Naive thymus-derived CD4-positive, alpha-beta T cell (primary cell): ENCODE measurements at regions of chr16 and their contacts with region 1.

Region 1: GRCh38 chr16:75110637-75111513 is 5.7 kb downstream of the LDHD start:
- DNase-seq: peak; percentile 66 to 83 (median 78)
- ATAC-seq: peak; percentile 91
- H3K4me3 ChIP-seq: peak overlapping the region; percentile 36
- H3K4me3 Mint-ChIP-seq: peak overlapping the region in 9 of 10 donors; percentile 34 to 78 (median 59)
- H3K27ac ChIP-seq: no peak overlapping the region
- H3K27ac Mint-ChIP-seq: peak overlapping the region in 6 of 9 donors; percentile 54 to 93 (median 78)
- H3K4me1 ChIP-seq: peaks cover 19 to 32% of the 10 kb centered on the region in 2 donors
- H3K4me1 Mint-ChIP-seq: peaks cover 30 to 66% (median 35%) of the 10 kb centered on the region in 7 donors
- H3K27me3 ChIP-seq: no peaks in the 10 kb centered on the region
- H3K27me3 Mint-ChIP-seq: peaks cover 0 to 10% (median 10%) of the 10 kb centered on the region in 5 donors

Region 2: GRCh38 chr16:74709441-74709877 is 401.4 kb before region 1 on chr16:
- CTCF ChIA-PET with region 1: interaction called, 8 read pairs
- POLR2A ChIA-PET with region 1: no interaction called
- intact Hi-C with region 1: loop called in 1 of 2 experiments (anchors 1 kb)
- DNase-seq: peak; percentile 62 to 86 (median 78)
- ATAC-seq: peak; percentile 99
- H3K4me3 ChIP-seq: no peak overlapping the region
- H3K4me3 Mint-ChIP-seq: no peak overlapping the region
- H3K27ac ChIP-seq: no peak overlapping the region
- H3K27ac Mint-ChIP-seq: peak overlapping the region in 5 of 9 donors; percentile 3 to 85 (median 29)
- H3K4me1 ChIP-seq: no peaks in the 10 kb centered on the region
- H3K4me1 Mint-ChIP-seq: peaks cover 4 to 10% (median 6%) of the 10 kb centered on the region in 7 donors
- H3K27me3 ChIP-seq: no peaks in the 10 kb centered on the region
- H3K27me3 Mint-ChIP-seq: peaks cover 0 to 6% (median 0%) of the 10 kb centered on the region in 5 donors

Region 3: GRCh38 chr16:74868501-74868900 is 242.4 kb before region 1 on chr16:
- CTCF ChIA-PET with region 1: no interaction called
- POLR2A ChIA-PET with region 1: no interaction called
- intact Hi-C with region 1: loop called in 1 of 2 experiments (anchors 5 kb)
- DNase-seq: peak in 6 of 9 donors; percentile 28 to 63 (median 42)
- ATAC-seq: peak; percentile 89
- H3K4me3 ChIP-seq: no peak overlapping the region
- H3K4me3 Mint-ChIP-seq: peak overlapping the region; percentile 8 to 78 (median 56)
- H3K27ac ChIP-seq: peak overlapping the region; percentile 69
- H3K27ac Mint-ChIP-seq: peak overlapping the region; percentile 85 to 96 (median 95)
- H3K4me1 ChIP-seq: peaks cover 3 to 22% of the 10 kb centered on the region in 2 donors
- H3K4me1 Mint-ChIP-seq: peaks cover 16 to 33% (median 29%) of the 10 kb centered on the region in 7 donors
- H3K27me3 ChIP-seq: no peaks in the 10 kb centered on the region
- H3K27me3 Mint-ChIP-seq: no peaks in the 10 kb centered on the region

Region 4: GRCh38 chr16:74991593-74992403 is 119.1 kb before region 1 on chr16:
- CTCF ChIA-PET with region 1: interaction called, 64 read pairs
- POLR2A ChIA-PET with region 1: interaction called, 3 read pairs
- intact Hi-C with region 1: no loop called
- DNase-seq: no peak
- ATAC-seq: no peak
- H3K4me3 ChIP-seq: no peak overlapping the region
- H3K4me3 Mint-ChIP-seq: no peak overlapping the region
- H3K27ac ChIP-seq: no peak overlapping the region
- H3K27ac Mint-ChIP-seq: no peak overlapping the region
- H3K4me1 ChIP-seq: no peaks in the 10 kb centered on the region
- H3K4me1 Mint-ChIP-seq: no peaks in the 10 kb centered on the region
- H3K27me3 ChIP-seq: no peaks in the 10 kb centered on the region
- H3K27me3 Mint-ChIP-seq: peaks cover 0 to 23% (median 0%) of the 10 kb centered on the region in 5 donors

Region 5: DNA sequence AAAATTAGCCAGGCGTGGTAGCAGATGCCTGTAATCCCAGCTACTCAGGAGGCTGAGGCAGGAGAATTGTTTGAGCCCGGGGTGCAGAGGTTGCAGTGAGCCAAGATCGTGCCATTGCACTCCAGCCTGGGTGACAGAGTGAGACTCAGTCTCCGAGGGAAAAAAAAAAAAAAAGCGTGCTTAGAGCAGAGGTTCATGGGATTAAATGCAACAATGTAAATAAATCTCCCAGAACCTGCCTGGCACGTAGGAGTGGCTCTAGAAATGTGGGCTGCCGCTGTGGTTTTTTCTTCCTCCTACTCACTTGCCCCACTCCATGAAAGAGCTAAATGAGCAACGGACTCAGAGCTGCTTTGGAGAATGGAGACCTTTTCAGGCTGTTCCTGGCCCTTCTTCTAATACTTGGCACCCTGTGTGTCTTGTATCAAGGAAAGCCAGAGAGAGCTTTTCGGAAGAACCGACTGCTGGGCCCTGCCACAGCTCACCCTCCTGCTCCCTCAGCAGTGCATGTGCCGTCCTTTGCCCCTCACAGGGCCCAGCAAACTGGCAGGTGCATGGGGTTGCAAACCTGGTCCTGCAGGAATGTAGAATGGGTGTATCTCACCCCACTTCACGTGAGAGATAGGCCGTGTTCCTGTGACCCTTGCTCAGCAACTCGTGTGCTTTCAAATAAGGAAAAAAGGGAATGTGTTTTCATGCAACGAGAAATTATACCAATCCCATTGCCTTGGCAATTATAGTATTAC is 46.3 kb before region 1 on chr16:
- CTCF ChIA-PET with region 1: interaction called, 5 read pairs
- POLR2A ChIA-PET with region 1: no interaction called
- intact Hi-C with region 1: loop called (anchors 2 kb)
- DNase-seq: peak in 6 of 9 donors; percentile 10 to 35 (median 20)
- ATAC-seq: peak; percentile 57
- H3K4me3 ChIP-seq: peak overlapping the region; percentile 45
- H3K4me3 Mint-ChIP-seq: peak overlapping the region; percentile 64 to 91 (median 79)
- H3K27ac ChIP-seq: peak overlapping the region; percentile 41
- H3K27ac Mint-ChIP-seq: peak overlapping the region; percentile 83 to 93 (median 89)
- H3K4me1 ChIP-seq: peaks cover 5 to 20% of the 10 kb centered on the region in 2 donors
- H3K4me1 Mint-ChIP-seq: peaks cover 17 to 73% (median 45%) of the 10 kb centered on the region in 7 donors
- H3K27me3 ChIP-seq: no peaks in the 10 kb centered on the region
- H3K27me3 Mint-ChIP-seq: no peaks in the 10 kb centered on the region

Region 6: DNA sequence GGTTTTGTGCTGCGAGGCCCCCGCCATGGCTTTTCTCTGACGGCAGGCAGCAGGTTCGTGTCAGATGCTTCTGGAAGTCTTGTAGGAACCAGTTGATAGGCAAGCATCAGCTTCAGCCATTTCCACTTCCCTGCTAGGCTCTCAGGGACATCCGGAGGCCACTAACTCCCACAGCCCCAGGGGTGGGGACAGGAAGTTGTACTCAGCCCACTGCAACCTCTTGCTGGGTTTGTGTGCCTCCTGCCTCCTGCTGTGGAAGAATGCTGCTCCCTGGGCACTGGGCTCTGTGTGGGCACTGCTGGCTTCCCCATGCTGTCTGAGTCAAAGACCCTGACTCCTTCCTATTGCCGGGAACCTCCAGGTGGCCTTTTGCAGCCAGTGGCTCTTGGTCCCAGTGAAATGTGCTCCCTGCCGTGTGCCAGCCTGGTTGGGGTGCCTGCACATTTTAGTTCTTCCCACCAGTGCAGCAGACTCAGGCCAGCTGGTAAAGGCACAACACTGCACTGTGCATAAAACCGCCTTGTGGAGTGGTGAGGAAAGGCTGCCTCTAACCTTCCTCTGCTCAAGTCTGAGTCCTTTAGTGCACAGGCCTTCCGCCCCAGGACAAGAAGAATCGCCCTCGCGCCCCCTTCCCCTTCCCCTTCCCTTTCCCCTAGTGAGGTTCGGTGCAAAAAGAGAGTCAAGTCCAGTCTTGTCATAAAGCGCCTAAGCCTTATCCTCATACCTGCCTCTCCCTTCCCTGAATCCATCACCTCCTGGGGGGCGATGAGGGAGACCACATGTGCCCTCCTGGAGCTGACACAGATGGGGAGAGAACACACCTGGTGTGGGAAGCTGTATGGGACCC is 10.9 kb before region 1 on chr16:
- CTCF ChIA-PET with region 1: interaction called, 11 read pairs
- POLR2A ChIA-PET with region 1: no interaction called
- intact Hi-C with region 1: loop called in 1 of 2 experiments (anchors 1 kb)
- DNase-seq: peak in 5 of 9 donors; percentile 24 to 45 (median 35)
- ATAC-seq: peak; percentile 60
- H3K4me3 ChIP-seq: no peak overlapping the region
- H3K4me3 Mint-ChIP-seq: peak overlapping the region in 8 of 10 donors; percentile 33 to 72 (median 50)
- H3K27ac ChIP-seq: peak overlapping the region; percentile 50
- H3K27ac Mint-ChIP-seq: peak overlapping the region; percentile 62 to 92 (median 79)
- H3K4me1 ChIP-seq: peaks cover 29 to 33% of the 10 kb centered on the region in 2 donors
- H3K4me1 Mint-ChIP-seq: peaks cover 22 to 80% (median 37%) of the 10 kb centered on the region in 7 donors
- H3K27me3 ChIP-seq: no peaks in the 10 kb centered on the region
- H3K27me3 Mint-ChIP-seq: no peaks in the 10 kb centered on the region

Region 7: DNA sequence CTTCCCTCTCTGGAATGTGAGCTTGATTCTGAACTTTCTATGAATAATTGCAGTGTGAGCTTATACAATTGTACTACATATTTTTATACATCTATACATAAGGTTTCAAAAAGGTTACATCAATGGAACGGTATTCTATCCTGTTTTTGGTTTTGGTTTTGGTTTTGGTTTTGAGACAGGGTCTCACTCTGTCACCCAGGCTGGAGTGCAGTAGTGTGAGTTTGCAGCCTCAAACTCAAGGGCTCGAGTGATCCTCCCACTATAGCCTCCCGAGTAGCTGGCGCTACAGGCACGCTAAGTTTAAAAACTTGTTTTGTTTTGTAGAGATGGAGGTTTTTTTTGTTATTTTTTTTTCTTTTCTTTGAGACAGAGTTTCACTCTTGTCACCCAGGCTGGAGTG is 109.0 kb after region 1 on chr16:
- CTCF ChIA-PET with region 1: no interaction called
- POLR2A ChIA-PET with region 1: no interaction called
- intact Hi-C with region 1: no loop called
- DNase-seq: peak in 5 of 9 donors; percentile 34 to 53 (median 44)
- ATAC-seq: peak; percentile 79
- H3K4me3 ChIP-seq: peak overlapping the region; percentile 39
- H3K4me3 Mint-ChIP-seq: peak overlapping the region; percentile 62 to 96 (median 90)
- H3K27ac ChIP-seq: peak overlapping the region; percentile 29
- H3K27ac Mint-ChIP-seq: peak overlapping the region; percentile 84 to 96 (median 93)
- H3K4me1 ChIP-seq: peaks cover 0 to 12% of the 10 kb centered on the region in 2 donors
- H3K4me1 Mint-ChIP-seq: peaks cover 0 to 18% (median 14%) of the 10 kb centered on the region in 7 donors
- H3K27me3 ChIP-seq: no peaks in the 10 kb centered on the region
- H3K27me3 Mint-ChIP-seq: no peaks in the 10 kb centered on the region